Activated T-helper 2 cell treated with anti-CD3 and anti-CD28 coated beads, Interferon-gamma antibody, Interleukin-2, Interleukin-4, amounts not matched to agents 10 μg/mL and 5 μg/mL and 100 μg/mL, durations not matched to agents 14 hours and 24 hours and 36 hours (primary cell): ENCODE measurements at regions of chr5 and their contacts with region 1.

Region 1: DNA sequence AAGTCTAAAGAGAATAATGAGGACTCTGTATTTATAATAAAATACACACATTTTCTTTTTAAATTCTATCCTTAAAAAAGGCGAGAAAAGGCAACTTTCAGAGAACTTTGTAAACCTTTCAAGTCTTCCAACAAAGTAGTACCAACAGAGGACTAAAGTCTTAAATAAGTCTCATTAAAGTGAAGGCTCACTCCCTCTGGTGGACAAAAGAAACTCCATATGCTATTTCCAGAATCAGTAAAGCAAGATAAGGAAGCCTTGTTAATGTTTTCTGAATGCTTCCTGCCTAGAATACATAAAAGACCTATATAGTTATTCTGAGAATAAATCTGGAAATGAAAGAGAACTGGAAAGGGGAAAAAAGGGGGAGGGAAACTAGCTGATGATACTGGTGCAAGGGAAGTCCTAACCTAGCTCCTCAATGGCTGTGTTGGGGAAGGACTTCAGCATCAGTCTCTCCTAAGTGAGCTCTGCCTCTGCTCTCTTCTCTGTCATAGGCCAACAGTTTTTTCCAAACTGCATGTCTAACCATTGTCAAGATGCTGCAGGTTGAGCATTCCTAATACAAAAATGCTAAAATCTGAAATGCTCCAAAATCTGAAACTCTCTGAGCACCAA is 7.2 kb downstream of the HMGCS1 start:
- DNase-seq: no peak
- H3K4me3 Mint-ChIP-seq: peak overlapping the region; percentile 10
- H3K27ac Mint-ChIP-seq: peak overlapping the region; percentile 68
- H3K4me1 Mint-ChIP-seq: peaks cover 84% of the 10 kb centered on the region
- H3K27me3 Mint-ChIP-seq: no peaks in the 10 kb centered on the region

Region 2: DNA sequence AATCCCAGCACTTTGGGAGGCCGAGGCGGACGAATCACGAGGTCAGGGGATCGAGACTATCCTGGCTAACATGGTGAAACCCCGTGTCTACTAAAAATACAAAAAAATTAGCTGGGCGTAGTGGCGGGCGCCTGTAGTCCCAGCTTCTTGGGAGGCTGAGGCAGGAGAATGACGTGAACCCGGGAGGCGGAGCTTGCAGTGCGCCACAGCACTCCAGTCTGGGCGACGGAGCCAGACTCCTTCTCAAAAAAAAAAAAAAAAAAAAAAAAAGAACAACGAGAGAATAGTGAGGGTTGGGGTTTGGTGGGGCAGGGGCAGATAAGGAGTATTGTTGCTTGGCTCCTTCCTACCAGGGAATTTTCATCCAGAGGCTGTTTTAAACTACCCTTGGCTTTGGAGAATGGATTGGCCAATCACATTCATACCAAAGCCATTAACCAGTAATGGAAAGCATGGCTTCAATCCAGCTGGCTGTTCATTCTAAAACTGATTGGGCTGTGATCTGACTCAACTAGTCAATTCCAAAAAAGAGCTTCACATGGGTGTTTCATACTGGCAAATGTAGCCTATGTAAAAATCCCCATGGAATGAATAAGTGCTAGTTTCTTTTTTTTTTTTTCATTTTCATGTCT is 1860.0 kb before region 1 on chr5:
- intact Hi-C with region 1: no loop called
- DNase-seq: no peak
- H3K4me3 Mint-ChIP-seq: no peak overlapping the region
- H3K27ac Mint-ChIP-seq: no peak overlapping the region
- H3K4me1 Mint-ChIP-seq: no peaks in the 10 kb centered on the region
- H3K27me3 Mint-ChIP-seq: no peaks in the 10 kb centered on the region

Region 3: DNA sequence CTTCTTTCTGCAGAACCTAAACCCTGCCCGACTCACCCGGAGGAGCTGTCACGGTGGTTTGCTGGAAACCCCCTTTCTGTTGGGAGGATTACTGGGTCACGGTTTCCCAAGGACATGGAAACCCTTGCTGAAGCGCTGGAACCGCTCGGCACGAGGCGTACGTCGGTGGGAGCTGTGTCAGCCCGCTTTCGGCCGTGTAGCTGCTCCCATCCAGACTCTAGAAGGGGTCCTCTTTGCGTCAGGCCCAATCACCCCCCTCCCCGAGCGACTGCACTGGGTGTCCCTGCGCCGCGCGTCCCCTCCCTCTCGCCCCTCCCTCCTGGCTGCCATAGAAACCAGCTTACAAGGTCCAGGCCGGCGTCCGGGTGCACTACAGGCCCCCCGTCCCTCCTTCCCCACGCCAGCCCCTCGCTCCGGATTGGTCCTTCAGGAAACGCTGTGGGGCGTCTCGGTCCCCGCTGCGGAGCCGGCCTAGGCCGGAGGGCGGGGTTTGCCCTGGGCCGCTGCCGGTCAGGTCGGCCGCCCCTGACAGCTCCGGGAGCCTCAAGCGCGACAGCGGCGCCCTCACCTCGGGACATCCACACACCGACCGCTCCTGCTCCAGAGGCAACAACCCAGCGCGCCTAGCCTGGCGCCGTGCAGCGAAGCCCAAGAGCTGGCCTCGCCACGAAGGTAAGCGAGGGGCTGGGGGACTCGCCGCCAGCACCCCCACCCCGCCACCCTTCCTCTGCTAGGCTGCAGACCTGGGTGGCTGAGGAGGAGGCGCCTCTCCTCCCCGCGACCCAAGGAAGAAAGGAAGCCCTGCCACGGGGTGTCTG is 114.1 kb before region 1 on chr5 and contains the start of gene NIM1K:
- intact Hi-C with region 1: loop called (anchors 1 kb)
- DNase-seq: peak; percentile 35
- H3K4me3 Mint-ChIP-seq: peak within 1 kb of the TSS; percentile 82
- H3K27ac Mint-ChIP-seq: peak within 1 kb of the TSS; percentile 59
- H3K4me1 Mint-ChIP-seq: peaks cover 24% of the 10 kb centered on the region
- H3K27me3 Mint-ChIP-seq: peaks cover 10% of the 10 kb centered on the region
- total RNA-seq, gene NIM1K: 0.76 and 1.1 TPM in 2 replicates

Region 4: DNA sequence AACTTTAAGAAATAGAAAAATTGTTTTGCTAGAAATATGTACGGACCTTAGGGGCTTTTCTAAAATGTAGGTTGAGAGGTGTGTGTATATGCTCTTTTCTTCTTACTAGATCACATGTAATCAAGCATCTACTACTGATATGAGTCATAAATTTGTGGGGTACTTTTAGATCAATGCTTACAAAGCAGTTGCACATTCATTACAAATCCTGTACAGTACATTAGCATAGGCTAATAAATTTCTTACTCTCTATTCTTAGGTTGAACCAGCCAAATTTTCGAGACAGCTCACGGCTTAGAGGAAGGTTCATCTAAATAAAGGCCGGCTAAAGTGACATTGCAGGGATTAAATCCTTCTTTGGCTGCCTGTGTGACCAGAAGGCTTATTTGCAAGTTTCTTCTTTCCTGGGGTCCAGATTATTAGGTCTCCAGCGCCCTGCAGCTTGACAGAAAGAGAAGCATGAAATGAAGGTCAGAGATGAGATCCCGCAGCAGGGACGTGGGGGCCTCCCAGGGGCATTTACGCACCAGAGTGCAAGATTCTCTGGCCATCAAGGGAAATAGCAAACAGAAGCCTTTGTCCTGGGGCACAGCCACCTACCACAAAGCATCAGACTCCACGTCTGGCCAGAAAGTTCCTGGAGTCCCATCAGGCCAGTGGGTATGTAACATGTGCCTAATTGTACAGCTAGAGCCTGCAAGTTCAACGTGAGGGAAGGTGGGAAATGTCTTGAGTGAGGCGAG is 61.1 kb before region 1 on chr5:
- intact Hi-C with region 1: loop called (anchors 5 kb)
- DNase-seq: no peak
- H3K4me3 Mint-ChIP-seq: no peak overlapping the region
- H3K27ac Mint-ChIP-seq: no peak overlapping the region
- H3K4me1 Mint-ChIP-seq: peaks cover 42% of the 10 kb centered on the region
- H3K27me3 Mint-ChIP-seq: peaks cover 10% of the 10 kb centered on the region

Region 5: DNA sequence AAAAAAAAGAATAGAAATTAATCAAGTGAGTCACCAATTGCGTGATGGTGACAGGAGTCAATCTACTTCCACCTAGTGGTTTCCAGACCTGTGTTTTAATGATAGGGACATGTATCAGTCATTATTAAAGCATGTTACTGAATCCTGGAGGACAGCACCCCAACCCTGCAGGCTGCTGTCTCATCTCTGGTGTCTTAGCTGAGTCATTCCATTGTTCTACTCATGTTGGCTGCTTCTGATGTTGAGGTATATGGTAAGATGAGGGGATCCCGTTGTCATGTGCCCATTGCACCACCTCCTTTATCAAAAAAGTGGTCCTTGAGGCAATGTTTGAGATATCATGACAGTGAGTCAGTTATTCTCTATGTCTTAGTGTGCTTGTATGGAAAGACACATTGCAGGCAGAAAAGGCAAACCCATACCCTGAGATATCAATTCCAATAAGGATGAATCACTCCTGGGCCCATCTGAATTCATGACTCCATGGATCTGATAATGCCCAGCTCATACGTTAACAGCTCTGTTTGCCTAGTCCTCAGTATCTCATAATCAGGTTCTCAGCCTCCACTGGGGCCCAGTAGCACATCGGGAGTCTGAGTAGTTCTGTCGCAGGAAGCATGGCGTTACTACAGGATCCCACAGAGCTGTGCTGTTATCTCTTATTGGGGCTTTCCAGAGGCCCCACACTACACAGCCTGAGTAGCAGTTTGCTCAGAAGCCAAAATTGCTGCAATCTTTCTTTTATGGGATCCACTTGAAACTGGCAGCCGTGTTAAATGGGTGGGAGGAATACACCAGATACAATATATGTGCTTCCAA is 24.0 kb before region 1 on chr5:
- intact Hi-C with region 1: loop called (anchors 1 kb)
- DNase-seq: no peak
- H3K4me3 Mint-ChIP-seq: no peak overlapping the region
- H3K27ac Mint-ChIP-seq: no peak overlapping the region
- H3K4me1 Mint-ChIP-seq: peaks cover 7% of the 10 kb centered on the region
- H3K27me3 Mint-ChIP-seq: no peaks in the 10 kb centered on the region